CD4-positive, alpha-beta memory T cell (primary cell): ENCODE measurements at regions of chrX and their contacts with region 1.

Region 1: GRCh38 chrX:101595739-101596419 is 21.9 kb downstream of the ARMCX6 start:
- DNase-seq: peak; percentile 42 to 62 (median 56)
- H3K4me3 ChIP-seq: no peak overlapping the region
- H3K4me3 Mint-ChIP-seq: no peak overlapping the region
- H3K27ac ChIP-seq: no peak overlapping the region
- H3K27ac Mint-ChIP-seq: no peak overlapping the region
- H3K4me1 ChIP-seq: no peaks in the 10 kb centered on the region
- H3K4me1 Mint-ChIP-seq: no peaks in the 10 kb centered on the region
- H3K27me3 ChIP-seq: no peaks in the 10 kb centered on the region
- H3K27me3 Mint-ChIP-seq: peaks cover 0 to 9% of the 10 kb centered on the region in 2 donors

Region 2: GRCh38 chrX:101359966-101360365 is 235.9 kb before region 1 on chrX:
- CTCF ChIA-PET with region 1: no interaction called
- POLR2A ChIA-PET with region 1: no interaction called
- intact Hi-C with region 1: no loop called
- DNase-seq: no peak
- H3K4me3 ChIP-seq: no peak overlapping the region
- H3K4me3 Mint-ChIP-seq: no peak overlapping the region
- H3K27ac ChIP-seq: no peak overlapping the region
- H3K27ac Mint-ChIP-seq: no peak overlapping the region
- H3K4me1 ChIP-seq: no peaks in the 10 kb centered on the region
- H3K4me1 Mint-ChIP-seq: peaks cover 0 to 2% (median under 1%) of the 10 kb centered on the region in 4 donors
- H3K27me3 ChIP-seq: no peaks in the 10 kb centered on the region
- H3K27me3 Mint-ChIP-seq: peaks cover 0 to 2% of the 10 kb centered on the region in 2 donors

Region 3: DNA sequence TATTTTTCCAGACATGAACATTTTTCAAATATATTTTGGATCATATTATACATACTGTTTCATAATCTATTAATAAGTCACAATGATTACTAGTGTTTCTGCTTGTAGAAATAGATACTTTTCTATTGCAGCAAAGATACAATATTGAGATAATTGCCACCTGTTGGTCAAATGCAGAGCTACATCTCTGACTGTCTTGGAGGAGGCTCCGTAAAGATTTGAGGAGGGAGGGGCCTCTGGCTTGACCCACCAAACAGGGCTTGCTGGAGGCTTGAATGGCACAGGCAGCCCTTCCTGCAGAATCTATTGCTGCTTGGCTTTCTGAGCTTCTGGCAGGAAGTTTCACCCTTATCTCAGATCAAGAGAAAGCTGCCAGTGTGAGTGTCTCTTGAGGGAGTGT is 163.1 kb after region 1 on chrX:
- CTCF ChIA-PET with region 1: interaction called, 19 read pairs
- POLR2A ChIA-PET with region 1: no interaction called
- intact Hi-C with region 1: loop called (anchors 5 kb)
- DNase-seq: peak; percentile 22 to 44 (median 33)
- H3K4me3 ChIP-seq: no peak overlapping the region
- H3K4me3 Mint-ChIP-seq: no peak overlapping the region
- H3K27ac ChIP-seq: no peak overlapping the region
- H3K27ac Mint-ChIP-seq: no peak overlapping the region
- H3K4me1 ChIP-seq: no peaks in the 10 kb centered on the region
- H3K4me1 Mint-ChIP-seq: peaks cover 0 to 2% (median 0%) of the 10 kb centered on the region in 4 donors
- H3K27me3 ChIP-seq: no peaks in the 10 kb centered on the region
- H3K27me3 Mint-ChIP-seq: peaks cover 2% of the 10 kb centered on the region in 2 donors

Region 4: GRCh38 chrX:101799387-101799786 is 203.5 kb after region 1 on chrX:
- CTCF ChIA-PET with region 1: interaction called, 4 read pairs
- POLR2A ChIA-PET with region 1: no interaction called
- intact Hi-C with region 1: loop called (anchors 5 kb)
- DNase-seq: peak; percentile 78 to 87 (median 82)
- H3K4me3 ChIP-seq: no peak overlapping the region
- H3K4me3 Mint-ChIP-seq: peak overlapping the region in 5 of 8 donors; percentile 2 to 69 (median 65)
- H3K27ac ChIP-seq: no peak overlapping the region
- H3K27ac Mint-ChIP-seq: peak overlapping the region in 3 of 7 donors; percentile 35 to 54 (median 49)
- H3K4me1 ChIP-seq: no peaks in the 10 kb centered on the region
- H3K4me1 Mint-ChIP-seq: peaks cover 1 to 9% (median 6%) of the 10 kb centered on the region in 4 donors
- H3K27me3 ChIP-seq: no peaks in the 10 kb centered on the region
- H3K27me3 Mint-ChIP-seq: peaks cover 0 to 2% of the 10 kb centered on the region in 2 donors

Region 5: DNA sequence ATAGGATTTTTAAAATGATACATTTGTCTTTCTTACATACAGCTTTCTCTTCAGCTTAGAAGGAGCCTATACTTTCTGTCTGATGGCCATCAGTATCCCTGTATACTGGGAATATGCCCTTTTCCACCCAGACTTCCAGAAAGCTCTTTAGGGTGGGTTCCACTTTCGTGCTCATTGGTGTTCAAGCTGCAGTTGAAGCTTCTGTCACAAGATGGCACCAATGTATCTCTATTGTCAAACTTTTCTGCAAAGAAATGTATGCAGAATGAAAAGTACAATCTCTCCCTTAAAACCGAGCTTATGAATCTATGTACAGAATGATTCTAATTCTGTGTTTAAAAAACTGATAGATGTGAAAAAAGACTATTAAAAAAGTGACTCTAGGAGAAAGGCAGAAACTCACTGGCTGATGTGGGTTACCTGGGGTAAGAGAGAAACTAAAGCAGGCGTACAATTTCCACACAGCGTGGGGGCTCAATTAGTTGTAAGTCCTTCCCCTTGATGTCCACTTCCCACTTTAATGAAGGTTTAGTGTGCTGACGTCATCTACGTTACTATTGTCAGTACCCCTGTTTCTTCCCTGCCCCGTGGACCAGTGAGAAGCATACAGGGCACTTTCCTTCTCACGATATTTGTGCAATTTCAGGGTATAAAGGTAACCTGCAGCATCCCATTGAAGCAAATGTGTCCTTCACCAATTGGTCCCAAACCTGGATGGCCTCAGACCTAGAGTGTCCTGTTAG is 472.3 kb after region 1 on chrX:
- CTCF ChIA-PET with region 1: no interaction called
- POLR2A ChIA-PET with region 1: no interaction called
- intact Hi-C with region 1: loop called (anchors 5 kb)
- DNase-seq: peak in 4 of 5 donors; percentile 12 to 24 (median 22)
- H3K4me3 ChIP-seq: no peak overlapping the region
- H3K4me3 Mint-ChIP-seq: no peak overlapping the region
- H3K27ac ChIP-seq: no peak overlapping the region
- H3K27ac Mint-ChIP-seq: no peak overlapping the region
- H3K4me1 ChIP-seq: no peaks in the 10 kb centered on the region
- H3K4me1 Mint-ChIP-seq: no peaks in the 10 kb centered on the region
- H3K27me3 ChIP-seq: no peaks in the 10 kb centered on the region
- H3K27me3 Mint-ChIP-seq: peaks cover 2 to 5% of the 10 kb centered on the region in 2 donors

Region 6: DNA sequence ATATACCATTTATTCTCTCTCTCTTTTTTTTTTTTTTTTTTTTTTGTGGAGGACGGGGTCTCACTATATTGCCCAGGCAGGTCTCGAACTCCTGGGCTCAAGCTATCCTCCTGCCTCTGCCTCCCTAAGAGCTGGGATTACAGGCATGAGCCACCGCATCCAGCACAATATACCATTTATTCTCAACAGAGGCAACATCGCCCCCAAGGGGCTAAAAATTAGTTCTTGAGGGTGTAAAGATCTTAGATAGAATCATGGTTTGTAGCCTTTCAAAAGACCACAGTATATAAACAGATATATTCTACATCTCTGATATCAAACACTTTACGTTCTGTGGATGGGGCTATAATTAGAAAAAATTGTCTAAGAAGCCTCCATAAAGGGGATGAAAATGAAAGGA is 489.8 kb after region 1 on chrX:
- CTCF ChIA-PET with region 1: no interaction called
- POLR2A ChIA-PET with region 1: no interaction called
- intact Hi-C with region 1: loop called (anchors 5 kb)
- DNase-seq: no peak
- H3K4me3 ChIP-seq: no peak overlapping the region
- H3K4me3 Mint-ChIP-seq: no peak overlapping the region
- H3K27ac ChIP-seq: no peak overlapping the region
- H3K27ac Mint-ChIP-seq: no peak overlapping the region
- H3K4me1 ChIP-seq: no peaks in the 10 kb centered on the region
- H3K4me1 Mint-ChIP-seq: no peaks in the 10 kb centered on the region
- H3K27me3 ChIP-seq: no peaks in the 10 kb centered on the region
- H3K27me3 Mint-ChIP-seq: peaks cover 6% of the 10 kb centered on the region in 2 donors

Region 7: DNA sequence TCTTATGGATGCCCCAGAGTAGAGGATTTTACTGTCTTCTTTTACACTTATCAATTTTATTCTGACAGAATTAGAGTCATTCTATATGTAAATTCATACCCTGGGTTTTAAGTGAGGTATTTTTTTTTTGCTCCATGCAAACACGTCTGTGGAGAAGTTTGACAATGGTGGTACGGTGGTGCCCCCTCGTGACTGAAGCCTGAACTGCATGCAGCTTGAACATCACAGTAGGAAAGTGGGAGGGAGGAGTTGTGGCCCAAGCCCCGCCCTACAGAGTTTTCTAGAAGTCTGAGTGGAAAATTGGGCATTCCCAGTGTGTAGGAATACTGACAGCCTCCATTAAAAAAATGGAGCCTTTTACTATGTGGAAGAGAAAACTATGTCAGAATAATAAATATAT is 1267.9 kb after region 1 on chrX:
- CTCF ChIA-PET with region 1: no interaction called
- POLR2A ChIA-PET with region 1: no interaction called
- intact Hi-C with region 1: loop called (anchors 10 kb)
- DNase-seq: peak; percentile 74 to 79 (median 75)
- H3K4me3 ChIP-seq: no peak overlapping the region
- H3K4me3 Mint-ChIP-seq: no peak overlapping the region
- H3K27ac ChIP-seq: no peak overlapping the region
- H3K27ac Mint-ChIP-seq: no peak overlapping the region
- H3K4me1 ChIP-seq: no peaks in the 10 kb centered on the region
- H3K4me1 Mint-ChIP-seq: no peaks in the 10 kb centered on the region
- H3K27me3 ChIP-seq: no peaks in the 10 kb centered on the region
- H3K27me3 Mint-ChIP-seq: no peaks in the 10 kb centered on the region